ENCODE measurements at regions of chr12 and their contacts with region 1.

Region 1: GRCh38 chr12:82144505-82144904 is 213.7 kb downstream of the CCDC59 start:
- DNase-seq: no peak
- ATAC-seq: no peak
- H3K4me3 ChIP-seq: no peak overlapping the region
- H3K27ac ChIP-seq: no peak overlapping the region
- H3K4me1 ChIP-seq: no peaks in the 10 kb centered on the region
- H3K27me3 ChIP-seq: no peaks in the 10 kb centered on the region
- CTCF ChIP-seq: no peak

Region 2: GRCh38 chr12:82448911-82449578 is 304.5 kb after region 1 on chr12:
- intact Hi-C with region 1: loop called in 1 of 10 experiments (anchors 10 kb)
- DNase-seq: no peak
- ATAC-seq: no peak
- H3K4me3 ChIP-seq: no peak overlapping the region
- H3K27ac ChIP-seq: no peak overlapping the region
- H3K4me1 ChIP-seq: no peaks in the 10 kb centered on the region
- H3K27me3 ChIP-seq: no peaks in the 10 kb centered on the region
- CTCF ChIP-seq: no peak

Measured in heart right ventricle (tissue), 16 donors.